ENCODE measurements at regions of chr6 and their contacts with region 1.

Region 1: GRCh38 chr6:116268589-116269293 is 11.0 kb downstream of the TSPYL1 start:
- DNase-seq: peak in 1 of 35 experiments; percentile 73
- ATAC-seq: peak; percentile 69 to 87 (median 78)
- H3K4me3 ChIP-seq: no peak overlapping the region
- H3K4me3 Mint-ChIP-seq: no peak overlapping the region
- H3K27ac ChIP-seq: no peak overlapping the region
- H3K27ac Mint-ChIP-seq: peak overlapping the region; percentile 16 to 29
- H3K4me1 ChIP-seq: no peaks in the 10 kb centered on the region
- H3K4me1 Mint-ChIP-seq: peaks cover 31 to 54% (median 37%) of the 10 kb centered on the region in 3 donors
- H3K27me3 ChIP-seq: no peaks in the 10 kb centered on the region
- H3K27me3 Mint-ChIP-seq: no peaks in the 10 kb centered on the region

Region 2: DNA sequence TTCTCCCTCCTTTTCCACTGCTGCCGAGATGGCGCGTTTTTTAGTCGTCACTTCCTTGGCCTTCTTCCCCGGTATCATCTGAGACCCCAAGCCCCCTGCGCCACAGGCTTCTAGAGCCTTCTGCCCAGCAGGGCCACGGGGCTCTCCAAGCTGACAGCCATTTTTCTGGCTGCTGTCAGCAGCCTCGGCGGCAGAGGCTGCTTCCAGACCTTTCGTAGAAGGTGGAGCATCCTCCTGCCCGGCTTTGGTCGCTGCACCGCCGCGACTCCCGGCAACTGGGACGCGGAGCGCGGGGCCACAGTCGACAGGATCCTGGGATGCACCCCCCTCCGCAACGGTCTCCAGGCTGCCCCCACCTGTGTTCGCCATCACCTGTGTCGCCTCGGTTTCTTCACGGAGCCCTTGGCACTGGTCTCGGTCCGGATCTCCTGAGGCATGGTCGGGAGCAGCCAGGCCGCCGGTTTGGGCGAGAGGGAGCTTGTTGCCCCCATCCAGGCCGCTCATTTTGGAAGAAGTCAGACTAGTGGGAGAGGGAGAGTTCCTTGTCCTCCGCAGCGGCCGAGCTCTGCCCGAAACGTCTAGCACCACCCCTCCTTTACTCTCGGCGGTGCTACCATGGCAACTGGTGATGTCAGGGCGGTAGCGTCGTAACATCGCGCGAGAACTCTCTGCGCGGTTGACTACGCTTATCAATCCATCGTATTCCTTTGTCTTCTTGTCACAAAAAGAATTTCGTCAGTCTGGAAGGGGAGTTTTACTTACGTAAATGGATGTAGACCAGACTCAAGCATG is 15.0 kb before region 1 on chr6 and contains the start of gene TSPYL4:
- CTCF ChIA-PET with region 1: interaction called, 6 to 37 read pairs
- POLR2A ChIA-PET with region 1: interaction called, 9 to 17 read pairs
- DNase-seq: peak; percentile 78 to 98 (median 90)
- ATAC-seq: peak; percentile 96 to 98 (median 98)
- H3K4me3 ChIP-seq: peak within 1 kb of the TSS; percentile 71 to 100
- H3K4me3 Mint-ChIP-seq: no peak within 1 kb of the TSS
- H3K27ac ChIP-seq: peak within 1 kb of the TSS; percentile 98
- H3K27ac Mint-ChIP-seq: no peak within 1 kb of the TSS
- H3K4me1 ChIP-seq: peaks cover 28 to 29% of the 10 kb centered on the region in 2 experiments
- H3K4me1 Mint-ChIP-seq: peaks cover 8 to 34% (median 21%) of the 10 kb centered on the region in 3 donors
- H3K27me3 ChIP-seq: no peaks in the 10 kb centered on the region
- H3K27me3 Mint-ChIP-seq: no peaks in the 10 kb centered on the region
- total RNA-seq, gene TSPYL4: 18.6 to 60.2 (median 22.4) TPM

Region 3: GRCh38 chr6:116287689-116288282 is 19.0 kb after region 1 on chr6:
- CTCF ChIA-PET with region 1: interaction called, 16 to 23 read pairs
- POLR2A ChIA-PET with region 1: interaction called, 3 to 7 read pairs
- DNase-seq: peak in 1 of 35 experiments; percentile 69
- ATAC-seq: peak; percentile 68 to 78 (median 72)
- H3K4me3 ChIP-seq: no peak overlapping the region
- H3K4me3 Mint-ChIP-seq: no peak overlapping the region
- H3K27ac ChIP-seq: no peak overlapping the region
- H3K27ac Mint-ChIP-seq: no peak overlapping the region
- H3K4me1 ChIP-seq: no peaks in the 10 kb centered on the region
- H3K4me1 Mint-ChIP-seq: peaks cover 0 to 3% (median 1%) of the 10 kb centered on the region in 3 donors
- H3K27me3 ChIP-seq: no peaks in the 10 kb centered on the region
- H3K27me3 Mint-ChIP-seq: no peaks in the 10 kb centered on the region

Region 4: DNA sequence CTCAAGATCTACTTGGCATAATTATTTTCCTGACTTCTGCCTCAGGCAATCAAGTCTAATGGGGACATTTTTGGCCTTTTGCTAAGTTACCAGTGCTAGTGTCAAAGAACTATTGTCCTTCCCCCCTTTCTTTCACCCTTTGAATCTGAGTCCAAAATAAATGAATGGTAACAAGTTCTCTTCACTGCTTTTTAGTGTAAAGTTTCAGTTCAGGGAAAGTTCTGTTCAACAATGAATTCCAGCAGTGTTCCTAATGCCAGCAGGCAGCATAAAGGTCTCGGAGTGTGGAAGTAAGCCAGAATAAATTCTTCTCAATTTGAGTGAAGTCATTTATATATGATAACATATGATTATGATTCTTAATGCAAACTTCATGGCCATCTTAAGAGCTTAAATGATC is 31.8 kb after region 1 on chr6:
- CTCF ChIA-PET with region 1: no interaction called
- POLR2A ChIA-PET with region 1: no interaction called
- DNase-seq: no peak
- ATAC-seq: no peak
- H3K4me3 ChIP-seq: no peak overlapping the region
- H3K4me3 Mint-ChIP-seq: no peak overlapping the region
- H3K27ac ChIP-seq: no peak overlapping the region
- H3K27ac Mint-ChIP-seq: no peak overlapping the region
- H3K4me1 ChIP-seq: no peaks in the 10 kb centered on the region
- H3K4me1 Mint-ChIP-seq: no peaks in the 10 kb centered on the region
- H3K27me3 ChIP-seq: no peaks in the 10 kb centered on the region
- H3K27me3 Mint-ChIP-seq: no peaks in the 10 kb centered on the region

Region 5: GRCh38 chr6:116561377-116562018 is 292.8 kb after region 1 on chr6:
- CTCF ChIA-PET with region 1: interaction called, 3 to 21 read pairs
- POLR2A ChIA-PET with region 1: no interaction called
- DNase-seq: peak in 34 of 35 experiments; percentile 20 to 81 (median 52)
- ATAC-seq: peak; percentile 65 to 76 (median 73)
- H3K4me3 ChIP-seq: no peak overlapping the region
- H3K4me3 Mint-ChIP-seq: no peak overlapping the region
- H3K27ac ChIP-seq: no peak overlapping the region
- H3K27ac Mint-ChIP-seq: no peak overlapping the region
- H3K4me1 ChIP-seq: peaks cover 0 to 9% of the 10 kb centered on the region in 2 experiments
- H3K4me1 Mint-ChIP-seq: peaks cover 7 to 17% (median 8%) of the 10 kb centered on the region in 3 donors
- H3K27me3 ChIP-seq: peaks cover 0 to 19% of the 10 kb centered on the region in 2 experiments
- H3K27me3 Mint-ChIP-seq: peaks cover 22 to 25% of the 10 kb centered on the region in 2 donors